ENCODE measurements at regions of chr7 and their contacts with region 1.

Region 1: DNA sequence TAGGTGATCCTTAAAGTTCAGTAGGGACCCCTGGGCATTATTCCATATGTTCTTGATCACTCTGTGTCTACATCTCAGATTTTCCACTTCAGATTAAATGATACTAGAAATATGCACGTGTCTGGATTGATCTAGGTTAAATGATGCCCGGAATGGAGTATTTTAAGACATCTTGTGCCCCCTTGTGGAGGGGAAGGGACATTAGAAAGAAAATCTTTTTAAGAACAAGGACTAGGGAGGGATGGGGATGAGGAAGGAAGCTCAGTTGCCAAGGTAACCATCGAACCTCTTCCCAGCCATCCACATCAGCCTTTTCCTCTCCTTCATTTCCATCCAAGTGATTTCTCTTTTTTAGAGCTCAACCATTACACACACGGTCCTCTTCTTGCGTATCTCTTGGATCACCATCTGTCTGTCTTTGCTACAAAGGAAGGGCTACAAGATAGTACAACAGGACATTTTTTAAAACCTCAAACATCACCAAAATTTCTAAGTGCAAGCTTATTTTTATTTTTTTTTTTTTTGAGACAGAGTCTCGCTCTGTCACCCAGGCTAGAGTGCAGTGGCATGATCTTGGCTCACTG is 40.5 kb downstream of the PRSS2 start:
- DNase-seq: peak; percentile 64 to 82 (median 79)
- H3K4me3 ChIP-seq: no peak overlapping the region
- H3K4me3 Mint-ChIP-seq: peak overlapping the region in 7 of 8 donors; percentile 57 to 79 (median 71)
- H3K27ac ChIP-seq: peak overlapping the region; percentile 99
- H3K27ac Mint-ChIP-seq: peak overlapping the region; percentile 92 to 100 (median 100)
- H3K4me1 ChIP-seq: peaks cover 79% of the 10 kb centered on the region
- H3K4me1 Mint-ChIP-seq: peaks cover 48 to 76% (median 73%) of the 10 kb centered on the region in 4 donors
- H3K27me3 ChIP-seq: no peaks in the 10 kb centered on the region
- H3K27me3 Mint-ChIP-seq: no peaks in the 10 kb centered on the region

Region 2: GRCh38 chr7:142338633-142339501 is 472.4 kb before region 1 on chr7:
- CTCF ChIA-PET with region 1: interaction called, 4 read pairs
- POLR2A ChIA-PET with region 1: interaction called, 13 read pairs
- intact Hi-C with region 1: no loop called
- DNase-seq: no peak
- H3K4me3 ChIP-seq: no peak overlapping the region
- H3K4me3 Mint-ChIP-seq: peak overlapping the region in 2 of 8 donors; percentile 7 to 63
- H3K27ac ChIP-seq: no peak overlapping the region
- H3K27ac Mint-ChIP-seq: peak overlapping the region in 5 of 7 donors; percentile 21 to 68 (median 35)
- H3K4me1 ChIP-seq: no peaks in the 10 kb centered on the region
- H3K4me1 Mint-ChIP-seq: peaks cover 0 to 17% (median 6%) of the 10 kb centered on the region in 4 donors
- H3K27me3 ChIP-seq: no peaks in the 10 kb centered on the region
- H3K27me3 Mint-ChIP-seq: peaks cover 6 to 9% of the 10 kb centered on the region in 2 donors

Region 3: GRCh38 chr7:142451296-142451695 is 359.9 kb before region 1 on chr7:
- CTCF ChIA-PET with region 1: no interaction called
- POLR2A ChIA-PET with region 1: interaction called, 21 read pairs
- intact Hi-C with region 1: loop called (anchors 5 kb)
- DNase-seq: no peak
- H3K4me3 ChIP-seq: no peak overlapping the region
- H3K4me3 Mint-ChIP-seq: peak overlapping the region in 3 of 8 donors; percentile 8 to 65 (median 35)
- H3K27ac ChIP-seq: no peak overlapping the region
- H3K27ac Mint-ChIP-seq: peak overlapping the region in 2 of 7 donors; percentile 22 to 63
- H3K4me1 ChIP-seq: peaks cover 6% of the 10 kb centered on the region
- H3K4me1 Mint-ChIP-seq: peaks cover 11 to 30% (median 19%) of the 10 kb centered on the region in 4 donors
- H3K27me3 ChIP-seq: no peaks in the 10 kb centered on the region
- H3K27me3 Mint-ChIP-seq: peaks cover 0 to 2% of the 10 kb centered on the region in 2 donors

Region 4: DNA sequence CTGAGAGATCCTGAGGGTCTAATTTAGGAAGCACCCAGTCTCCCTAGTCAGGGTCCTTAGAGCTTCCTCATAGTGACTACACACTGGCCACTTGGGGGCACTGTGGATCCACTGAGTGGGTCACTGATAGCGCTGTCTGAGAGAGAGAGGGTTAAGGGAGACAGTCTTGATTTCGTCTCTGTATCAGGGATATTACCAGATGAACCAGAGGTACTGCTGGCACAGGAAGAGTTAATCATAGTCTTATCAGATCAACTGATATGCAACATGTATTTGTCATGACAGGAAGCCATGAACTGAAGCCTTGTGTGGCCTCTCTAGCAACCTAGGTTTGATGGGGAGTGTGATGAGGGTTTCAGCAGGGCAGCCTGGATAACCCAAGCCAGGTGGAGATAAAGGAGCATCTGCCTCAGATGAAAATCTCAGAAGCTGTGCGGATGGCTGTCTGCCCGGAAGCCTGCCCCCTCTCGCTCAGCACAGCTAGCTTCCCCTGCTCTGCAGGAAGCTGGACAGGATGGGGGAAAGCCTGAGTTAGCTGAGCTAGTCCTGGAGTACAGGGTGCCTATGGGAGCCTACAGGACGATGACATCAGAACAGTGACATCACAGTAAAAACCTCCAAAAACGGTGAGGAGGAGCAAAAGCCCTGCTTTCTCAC is 276.0 kb before region 1 on chr7:
- CTCF ChIA-PET with region 1: interaction called, 31 read pairs
- POLR2A ChIA-PET with region 1: interaction called, 87 read pairs
- intact Hi-C with region 1: loop called (anchors 1 kb)
- DNase-seq: peak; percentile 57 to 80 (median 64)
- H3K4me3 ChIP-seq: peak overlapping the region in 1 of 2 donors; percentile 38
- H3K4me3 Mint-ChIP-seq: peak overlapping the region; percentile 61 to 86 (median 76)
- H3K27ac ChIP-seq: peak overlapping the region; percentile 49
- H3K27ac Mint-ChIP-seq: peak overlapping the region; percentile 32 to 94 (median 87)
- H3K4me1 ChIP-seq: peaks cover 28% of the 10 kb centered on the region
- H3K4me1 Mint-ChIP-seq: peaks cover 17 to 40% (median 23%) of the 10 kb centered on the region in 4 donors
- H3K27me3 ChIP-seq: no peaks in the 10 kb centered on the region
- H3K27me3 Mint-ChIP-seq: peaks cover 0 to 2% of the 10 kb centered on the region in 2 donors

Region 5: GRCh38 chr7:142626420-142627035 is 184.7 kb before region 1 on chr7:
- CTCF ChIA-PET with region 1: interaction called, 84 read pairs
- POLR2A ChIA-PET with region 1: interaction called, 114 read pairs
- intact Hi-C with region 1: no loop called
- DNase-seq: peak; percentile 55 to 67 (median 60)
- H3K4me3 ChIP-seq: no peak overlapping the region
- H3K4me3 Mint-ChIP-seq: peak overlapping the region; percentile 75 to 92 (median 89)
- H3K27ac ChIP-seq: peak overlapping the region; percentile 43
- H3K27ac Mint-ChIP-seq: peak overlapping the region; percentile 75 to 95 (median 88)
- H3K4me1 ChIP-seq: no peaks in the 10 kb centered on the region
- H3K4me1 Mint-ChIP-seq: peaks cover 0 to 5% (median 3%) of the 10 kb centered on the region in 4 donors
- H3K27me3 ChIP-seq: no peaks in the 10 kb centered on the region
- H3K27me3 Mint-ChIP-seq: no peaks in the 10 kb centered on the region

Region 6: GRCh38 chr7:142796608-142797385 is 14.4 kb before region 1 on chr7:
- CTCF ChIA-PET with region 1: interaction called, 623 read pairs
- POLR2A ChIA-PET with region 1: interaction called, 6,843 read pairs
- intact Hi-C with region 1: loop called (anchors 1 kb)
- DNase-seq: peak in 2 of 5 donors; percentile 41 to 47
- H3K4me3 ChIP-seq: peak overlapping the region; percentile 84 to 85
- H3K4me3 Mint-ChIP-seq: peak overlapping the region; percentile 93 to 100 (median 99)
- H3K27ac ChIP-seq: peak overlapping the region; percentile 99
- H3K27ac Mint-ChIP-seq: peak overlapping the region; percentile 98 to 100 (median 100)
- H3K4me1 ChIP-seq: peaks cover 68% of the 10 kb centered on the region
- H3K4me1 Mint-ChIP-seq: peaks cover 50 to 79% (median 62%) of the 10 kb centered on the region in 4 donors
- H3K27me3 ChIP-seq: no peaks in the 10 kb centered on the region
- H3K27me3 Mint-ChIP-seq: no peaks in the 10 kb centered on the region

Region 7: DNA sequence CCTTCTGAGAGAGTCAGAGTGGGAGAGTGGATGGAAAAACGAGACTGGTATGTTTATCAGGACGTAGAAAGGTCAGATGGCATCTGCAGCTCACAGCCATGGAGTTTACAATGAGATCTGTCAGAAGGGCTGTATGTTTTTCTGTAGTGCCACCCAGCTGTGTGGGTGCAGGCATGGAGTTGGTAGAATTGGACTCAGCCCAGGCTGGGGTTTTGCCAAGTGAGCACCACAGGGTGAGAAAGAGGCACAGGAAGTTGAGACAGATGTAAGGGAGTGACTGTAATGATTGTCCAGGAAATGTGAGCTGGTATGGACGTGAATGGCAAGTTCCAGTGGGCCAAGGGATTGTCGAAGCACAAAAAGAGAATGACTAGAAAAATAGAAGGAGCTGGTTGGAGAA is 560.8 kb after region 1 on chr7:
- CTCF ChIA-PET with region 1: no interaction called
- POLR2A ChIA-PET with region 1: interaction called, 15 read pairs
- intact Hi-C with region 1: no loop called
- DNase-seq: peak; percentile 46 to 65 (median 55)
- H3K4me3 ChIP-seq: no peak overlapping the region
- H3K4me3 Mint-ChIP-seq: peak overlapping the region in 7 of 8 donors; percentile 21 to 66 (median 62)
- H3K27ac ChIP-seq: no peak overlapping the region
- H3K27ac Mint-ChIP-seq: peak overlapping the region; percentile 65 to 90 (median 74)
- H3K4me1 ChIP-seq: peaks cover 43% of the 10 kb centered on the region
- H3K4me1 Mint-ChIP-seq: peaks cover 40 to 60% (median 50%) of the 10 kb centered on the region in 4 donors
- H3K27me3 ChIP-seq: no peaks in the 10 kb centered on the region
- H3K27me3 Mint-ChIP-seq: peaks cover 0 to 2% of the 10 kb centered on the region in 2 donors